ENCODE measurements at regions of chr12 and their contacts with region 1.

Region 1: DNA sequence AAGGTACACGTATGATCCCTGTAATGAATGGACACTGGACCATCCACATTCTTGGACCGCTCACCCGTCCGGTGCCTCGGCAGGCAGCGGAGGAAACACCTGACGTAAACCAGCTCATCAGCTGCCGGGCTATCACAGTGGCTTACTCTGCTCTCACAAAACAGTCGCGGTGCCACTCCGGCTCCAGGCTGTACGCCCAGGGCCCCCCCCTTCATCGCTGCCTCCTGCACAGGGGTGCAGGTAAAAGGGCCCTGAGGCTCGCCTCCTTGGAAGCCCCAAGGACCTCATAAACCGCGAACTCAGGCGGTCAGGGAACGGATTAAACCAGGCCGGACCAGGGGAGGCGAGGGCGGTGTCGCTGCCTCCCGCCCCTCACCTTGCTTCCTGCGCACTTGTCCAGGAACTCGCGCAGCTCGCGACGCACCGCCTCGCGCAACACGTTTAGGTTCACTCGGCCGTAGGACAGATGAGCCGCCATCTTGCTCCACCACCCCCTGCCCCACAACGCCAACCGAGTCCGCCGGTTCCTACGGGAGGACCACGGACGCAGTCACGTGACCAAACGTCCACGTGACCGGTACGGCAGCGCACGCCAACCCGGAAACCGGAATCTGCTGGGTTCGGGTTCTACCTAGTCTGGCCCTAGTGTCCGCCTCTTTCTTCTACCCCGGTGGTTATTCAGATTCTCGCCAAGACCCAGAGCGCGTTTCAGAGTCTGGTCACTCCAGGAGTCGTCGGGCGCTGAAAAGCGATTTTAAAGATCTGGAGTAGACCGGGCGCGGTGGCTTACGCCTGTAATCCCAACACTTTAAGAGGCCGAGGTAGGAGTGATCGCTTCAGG is at the start of gene VPS33A:
- DNase-seq: peak; percentile 93 to 98
- ATAC-seq: peak; percentile 86 to 94
- H3K4me3 ChIP-seq: peak within 1 kb of the TSS; percentile 86 to 100 (median 93)
- H3K27ac ChIP-seq: peak within 1 kb of the TSS; percentile 88 to 96 (median 93)
- H3K4me1 ChIP-seq: peaks cover 14% of the 10 kb centered on the region in 2 donors
- H3K27me3 ChIP-seq: no peaks in the 10 kb centered on the region
- CTCF ChIP-seq: peak in 2 of 5 experiments; percentile 53 to 58
- POLR2A ChIP-seq: peak; percentile 52 to 57
- total RNA-seq, gene VPS33A: 16.1 to 27.1 (median 20.5) TPM

Region 2: GRCh38 chr12:122064025-122064777 is 201.9 kb before region 1 on chr12:
- in situ Hi-C with region 1: no loop called
- intact Hi-C with region 1: no loop called
- DNase-seq: peak; percentile 33 to 90
- ATAC-seq: peak; percentile 72 to 87
- H3K4me3 ChIP-seq: no peak overlapping the region
- H3K27ac ChIP-seq: peak overlapping the region; percentile 55 to 61 (median 58)
- H3K4me1 ChIP-seq: peaks cover 27 to 29% of the 10 kb centered on the region in 2 donors
- H3K27me3 ChIP-seq: no peaks in the 10 kb centered on the region
- CTCF ChIP-seq: peak in 4 of 5 experiments; percentile 24 to 57 (median 38)
- POLR2A ChIP-seq: peak in 1 of 2 donors; percentile 28

Region 3: DNA sequence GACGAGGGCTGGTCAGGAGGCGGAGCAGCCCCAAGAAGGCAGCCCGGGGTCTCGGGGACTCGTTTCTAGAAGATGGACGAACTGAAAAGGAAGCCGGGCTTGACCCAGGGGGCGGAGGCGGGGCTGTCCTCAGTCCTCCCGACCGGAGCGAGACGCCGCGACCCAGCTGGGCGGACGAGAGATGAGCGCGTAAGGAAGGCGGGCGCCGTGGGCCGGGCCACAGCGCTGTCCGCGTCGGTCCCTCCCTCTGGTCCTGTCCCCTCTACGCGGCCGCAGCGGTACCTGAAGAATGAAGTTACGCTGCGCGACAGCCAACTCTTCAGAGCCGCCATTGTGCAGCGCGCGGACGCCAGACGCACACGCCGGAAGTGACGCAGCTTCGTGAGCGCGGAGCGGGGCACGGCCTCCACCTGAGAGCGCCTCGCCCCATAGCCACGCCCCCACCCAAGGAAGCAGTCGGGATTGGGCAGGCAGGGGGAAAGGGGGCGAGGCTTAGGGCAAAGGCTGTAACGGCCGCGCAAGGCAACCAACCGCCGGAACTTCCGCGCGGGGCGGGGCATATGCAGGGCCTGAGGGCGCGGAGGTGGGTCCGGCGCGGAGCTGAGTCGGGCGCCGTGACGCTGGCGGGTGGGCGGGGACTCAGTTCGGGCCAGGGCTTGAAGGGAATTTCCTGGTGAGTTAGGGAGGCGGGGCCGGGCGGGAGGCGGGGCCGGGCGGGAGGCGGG is 40.3 kb before region 1 on chr12 and contains the start of gene DIABLO:
- in situ Hi-C with region 1: no loop called
- intact Hi-C with region 1: loop called (anchors 5 kb)
- DNase-seq: peak; percentile 99 to 100
- ATAC-seq: peak; percentile 92 to 97
- H3K4me3 ChIP-seq: peak within 1 kb of the TSS; percentile 87 to 98 (median 94)
- H3K27ac ChIP-seq: peak within 1 kb of the TSS; percentile 92 to 98 (median 96)
- H3K4me1 ChIP-seq: peaks cover 19 to 21% of the 10 kb centered on the region in 2 donors
- H3K27me3 ChIP-seq: no peaks in the 10 kb centered on the region
- CTCF ChIP-seq: no peak
- POLR2A ChIP-seq: peak; percentile 90 to 98
- total RNA-seq, gene DIABLO: 32.8 to 63.8 (median 44.5) TPM